BJ (cell line): ENCODE measurements at regions of chr12 and their contacts with region 1.

Region 1: GRCh38 chr12:57893431-57894353 is 47.2 kb upstream of the CTDSP2 start:
- DNase-seq: peak; percentile 91
- H3K4me3 ChIP-seq: no peak overlapping the region
- H3K27me3 ChIP-seq: no peaks in the 10 kb centered on the region
- CTCF ChIP-seq: peak; percentile 37

Region 2: GRCh38 chr12:57815177-57816000 is 78.3 kb before region 1 on chr12:
- CTCF ChIA-PET with region 1: interaction called, 10 read pairs
- POLR2A ChIA-PET with region 1: interaction called, 8 read pairs
- DNase-seq: no peak
- H3K4me3 ChIP-seq: no peak overlapping the region
- H3K27me3 ChIP-seq: no peaks in the 10 kb centered on the region
- CTCF ChIP-seq: no peak